GM10248 (cell line): ENCODE measurements at regions of chr6 and their contacts with region 1.

Region 1: DNA sequence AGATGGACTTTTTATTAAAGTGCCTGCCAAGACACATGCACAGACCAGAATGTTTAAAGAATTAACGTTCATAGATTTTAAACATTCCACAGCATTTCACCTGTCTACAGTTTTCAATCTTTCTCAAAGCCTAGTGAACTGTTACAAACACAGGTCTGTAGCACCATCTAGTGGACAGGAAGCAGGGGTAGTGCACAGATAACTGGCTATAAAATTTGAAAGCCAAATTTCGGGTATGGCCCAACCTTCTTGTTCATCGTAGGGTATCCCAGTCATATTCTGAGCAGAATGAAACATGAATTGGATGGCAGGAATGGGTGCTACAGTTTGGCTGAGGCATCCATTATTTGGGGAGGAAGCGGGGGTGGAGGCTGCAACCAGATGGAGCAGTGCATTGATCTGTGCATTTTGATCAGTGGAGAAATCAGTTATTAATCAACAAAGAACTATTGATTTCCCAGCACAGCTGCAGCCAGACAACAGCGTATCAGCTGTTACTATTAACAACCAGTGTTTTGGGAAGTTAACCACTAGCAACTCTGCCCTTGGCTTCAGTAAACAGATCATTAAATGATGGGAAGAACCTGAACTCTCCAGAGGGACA is 56.1 kb upstream of the B3GAT2 start:
- DNase-seq: peak; percentile 56
- CTCF ChIP-seq: peak; percentile 85

Region 2: DNA sequence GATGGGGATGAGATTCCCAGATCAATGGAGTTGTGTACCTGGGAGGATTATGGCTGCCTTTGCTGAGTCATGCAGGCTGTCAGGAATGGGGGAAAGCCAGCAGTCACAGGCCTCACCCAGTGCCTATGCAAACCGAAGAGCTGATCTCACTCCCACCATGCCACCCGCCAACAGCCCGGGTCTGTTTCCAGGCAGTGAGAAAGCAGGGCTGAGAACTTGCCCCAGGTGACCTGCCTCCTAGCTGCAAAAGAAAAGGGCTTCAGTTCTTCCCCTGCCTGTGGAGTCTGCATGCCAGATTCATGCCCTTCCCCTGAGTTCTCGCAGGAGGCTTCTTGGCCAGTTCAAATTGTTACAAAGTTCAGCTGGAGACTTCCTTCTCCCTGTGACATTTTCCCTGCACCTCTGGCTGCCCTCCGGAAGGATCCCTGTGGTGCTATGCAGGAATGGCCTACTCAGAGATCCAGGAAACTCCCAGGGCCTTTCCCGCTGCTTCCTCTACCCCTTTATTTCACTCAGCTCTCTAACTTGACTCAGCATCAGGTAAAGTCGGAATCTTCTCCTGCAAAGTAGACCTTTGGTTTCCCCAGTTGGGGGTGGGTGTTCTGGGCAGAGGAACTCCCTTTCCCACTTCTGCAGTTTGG is 15.4 kb after region 1 on chr6:
- CTCF ChIA-PET with region 1: interaction called, 15 read pairs
- POLR2A ChIA-PET with region 1: no interaction called
- DNase-seq: no peak
- CTCF ChIP-seq: no peak